ENCODE measurements at regions of chr6 and their contacts with region 1.

Region 1: DNA sequence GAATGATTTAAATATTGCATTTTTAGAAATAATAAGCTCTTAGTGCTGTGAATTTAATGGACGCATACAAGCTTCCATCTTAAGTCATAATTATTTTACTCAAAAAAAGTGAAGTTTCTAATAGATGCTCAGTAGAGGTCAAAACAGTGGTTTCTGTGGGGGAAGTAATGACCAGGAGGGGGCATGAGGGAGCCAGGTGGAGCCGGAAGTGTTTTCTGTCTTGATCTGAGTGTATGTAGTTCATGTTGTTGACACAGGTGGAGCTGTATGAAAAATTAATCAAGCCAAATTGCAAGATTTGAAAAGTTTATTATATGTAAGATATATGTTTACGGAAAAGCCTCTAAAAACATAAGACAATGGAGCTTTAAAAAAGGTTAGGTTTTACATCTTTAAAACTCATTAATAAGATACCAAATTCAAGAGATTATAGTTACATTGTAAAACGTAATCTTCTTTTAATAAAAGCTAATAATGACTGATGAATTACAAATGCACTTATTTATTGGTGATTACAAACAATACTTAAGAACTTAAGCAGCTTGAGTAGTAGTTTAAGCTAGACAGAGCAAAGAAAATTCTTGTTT is 68.0 kb downstream of the PLAGL1 start:
- DNase-seq: peak; percentile 63
- H3K4me3 ChIP-seq: no peak overlapping the region
- H3K27ac ChIP-seq: no peak overlapping the region
- H3K4me1 ChIP-seq: no peaks in the 10 kb centered on the region
- CTCF ChIP-seq: peak; percentile 96

Region 2: GRCh38 chr6:143575440-143575839 is 364.7 kb before region 1 on chr6:
- CTCF ChIA-PET with region 1: no interaction called
- POLR2A ChIA-PET with region 1: no interaction called
- intact Hi-C with region 1: loop called (anchors 2 kb)
- DNase-seq: peak; percentile 69
- H3K4me3 ChIP-seq: no peak overlapping the region
- H3K27ac ChIP-seq: no peak overlapping the region
- H3K4me1 ChIP-seq: no peaks in the 10 kb centered on the region
- CTCF ChIP-seq: peak; percentile 93

Region 3: DNA sequence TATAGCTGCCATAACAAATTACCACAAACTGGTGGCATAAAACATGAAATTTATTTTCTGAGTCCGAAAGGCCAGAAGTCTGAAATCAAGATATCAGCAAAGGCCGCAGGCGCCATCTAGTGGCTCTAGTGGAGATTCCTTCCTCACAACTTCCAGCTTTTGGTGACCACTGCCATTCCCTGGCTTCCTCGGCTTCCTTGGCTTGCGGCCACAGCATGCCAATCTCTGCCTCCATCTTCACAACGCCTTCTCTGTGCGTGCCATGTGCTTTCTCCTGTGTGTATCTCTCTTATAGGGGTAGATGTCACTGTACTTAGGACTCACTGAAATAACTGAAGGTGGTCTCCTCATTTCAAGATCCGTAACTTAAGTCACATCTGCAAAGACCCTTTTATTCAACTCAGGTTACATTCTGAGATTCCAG is 73.4 kb after region 1 on chr6:
- CTCF ChIA-PET with region 1: no interaction called
- POLR2A ChIA-PET with region 1: no interaction called
- intact Hi-C with region 1: loop called (anchors 1 kb)
- DNase-seq: peak; percentile 61
- H3K4me3 ChIP-seq: no peak overlapping the region
- H3K27ac ChIP-seq: no peak overlapping the region
- H3K4me1 ChIP-seq: no peaks in the 10 kb centered on the region
- CTCF ChIP-seq: peak; percentile 95

Measured in OCI-LY7 (cell line).